ENCODE measurements at regions of chr6 and their contacts with region 1.

Region 1: DNA sequence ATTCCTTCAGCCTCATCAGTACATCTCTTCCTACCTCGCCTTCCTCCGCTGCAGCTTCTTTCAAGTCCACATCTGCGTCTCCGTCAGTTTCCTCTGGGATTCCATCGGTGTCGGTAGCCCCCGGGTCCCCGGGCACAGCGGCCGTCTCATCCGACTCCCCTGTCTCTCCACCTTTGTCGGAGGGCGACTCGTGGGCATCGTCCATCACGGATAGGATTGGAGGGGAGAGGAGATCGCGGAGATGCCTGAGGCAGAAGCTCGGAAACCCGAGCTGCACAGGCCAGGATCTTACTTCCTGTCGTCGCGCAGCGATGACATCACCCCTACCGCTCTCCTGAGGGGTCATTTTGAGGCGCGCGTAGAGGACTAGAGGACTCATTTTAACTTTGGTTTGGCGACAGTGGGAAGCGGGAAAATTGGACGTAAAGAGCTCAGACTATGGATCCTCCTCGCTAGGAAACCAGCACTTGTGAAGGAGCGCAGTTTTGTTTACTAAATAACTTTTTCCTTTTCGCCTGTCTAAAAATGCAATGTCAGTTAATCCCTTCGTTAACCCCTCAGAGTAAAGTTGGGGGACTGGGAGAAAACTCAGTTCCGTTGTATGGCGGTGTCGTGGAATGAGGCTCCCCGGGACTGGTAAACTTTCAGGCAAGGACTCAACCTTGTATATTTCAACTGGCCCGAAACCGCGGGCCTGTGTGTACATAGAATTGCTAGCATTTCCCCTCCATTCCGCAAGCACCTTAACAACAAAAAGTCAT is at the start of gene TAF11:
- DNase-seq: peak; percentile 94
- H3K4me3 Mint-ChIP-seq: peak within 1 kb of the TSS; percentile 99
- H3K27ac Mint-ChIP-seq: peak within 1 kb of the TSS; percentile 99
- H3K4me1 Mint-ChIP-seq: peaks cover 17% of the 10 kb centered on the region
- H3K27me3 Mint-ChIP-seq: no peaks in the 10 kb centered on the region
- CTCF ChIP-seq: no peak
- total RNA-seq, gene TAF11: 16.5 and 22.2 TPM in 2 replicates

Region 2: DNA sequence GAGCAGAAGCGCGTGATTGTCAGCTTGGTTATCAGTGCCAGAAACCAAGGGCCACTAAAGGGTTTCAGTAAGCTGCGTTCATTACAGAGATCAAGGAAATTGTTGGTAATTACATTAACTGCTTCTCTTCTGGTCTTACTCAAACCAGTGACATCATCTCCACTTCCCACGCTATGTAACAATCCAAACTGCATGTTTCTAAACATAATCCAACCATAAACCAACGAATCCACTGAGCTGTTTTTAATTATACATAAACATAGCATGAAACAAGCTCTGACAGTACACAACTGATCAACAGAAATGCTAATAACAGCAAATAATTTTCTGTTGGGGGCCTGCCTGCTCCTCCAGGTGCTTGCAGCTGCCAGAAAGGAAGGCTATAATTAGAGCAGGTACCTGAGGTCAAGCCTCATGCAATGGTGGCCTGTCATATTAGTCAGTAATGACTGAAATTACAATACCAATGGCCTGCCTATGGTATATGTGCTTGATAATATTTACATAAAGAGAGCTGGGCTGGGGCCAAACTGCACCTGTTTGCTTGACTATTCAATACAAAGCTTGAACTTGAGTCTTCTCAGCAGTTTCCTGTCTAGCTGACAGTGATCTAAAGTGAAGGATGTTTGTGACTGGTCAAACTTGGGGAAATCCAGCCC is 231.4 kb before region 1 on chr6:
- CTCF ChIA-PET with region 1: no interaction called
- POLR2A ChIA-PET with region 1: interaction called, 20 read pairs
- intact Hi-C with region 1: no loop called
- DNase-seq: peak; percentile 41
- H3K4me3 Mint-ChIP-seq: peak overlapping the region; percentile 75
- H3K27ac Mint-ChIP-seq: peak overlapping the region; percentile 89
- H3K4me1 Mint-ChIP-seq: peaks cover 19% of the 10 kb centered on the region
- H3K27me3 Mint-ChIP-seq: no peaks in the 10 kb centered on the region
- CTCF ChIP-seq: no peak

Region 3: GRCh38 chr6:34757687-34758274 is 130.2 kb before region 1 on chr6:
- CTCF ChIA-PET with region 1: no interaction called
- POLR2A ChIA-PET with region 1: interaction called, 20 read pairs
- intact Hi-C with region 1: loop called (anchors 5 kb)
- DNase-seq: no peak
- H3K4me3 Mint-ChIP-seq: no peak overlapping the region
- H3K27ac Mint-ChIP-seq: no peak overlapping the region
- H3K4me1 Mint-ChIP-seq: peaks cover 6% of the 10 kb centered on the region
- H3K27me3 Mint-ChIP-seq: no peaks in the 10 kb centered on the region
- CTCF ChIP-seq: no peak

Region 4: GRCh38 chr6:34810936-34811632 is 76.8 kb before region 1 on chr6:
- CTCF ChIA-PET with region 1: interaction called, 3 read pairs
- POLR2A ChIA-PET with region 1: interaction called, 13 read pairs
- intact Hi-C with region 1: no loop called
- DNase-seq: peak; percentile 67
- H3K4me3 Mint-ChIP-seq: no peak overlapping the region
- H3K27ac Mint-ChIP-seq: peak overlapping the region; percentile 71
- H3K4me1 Mint-ChIP-seq: peaks cover 15% of the 10 kb centered on the region
- H3K27me3 Mint-ChIP-seq: no peaks in the 10 kb centered on the region
- CTCF ChIP-seq: no peak

Region 5: DNA sequence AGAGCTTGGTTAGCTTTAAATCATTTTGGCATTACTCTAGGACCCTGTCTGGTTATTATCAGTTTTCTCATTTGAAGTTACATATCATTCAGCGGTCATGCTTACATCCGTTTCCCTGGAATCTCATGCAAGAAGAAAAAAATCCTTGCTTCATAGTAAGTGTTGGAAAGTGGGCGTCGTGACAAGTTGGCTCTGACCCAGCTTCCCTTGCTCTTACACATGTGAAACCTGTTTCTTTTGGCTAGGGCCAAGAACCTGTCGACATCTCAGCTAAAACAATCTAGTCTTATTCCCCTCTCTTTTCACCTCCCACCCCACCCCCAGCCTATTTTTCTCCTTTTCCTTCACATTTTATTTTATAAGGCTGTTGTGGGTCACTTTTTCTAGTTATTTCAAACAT is 46.6 kb after region 1 on chr6:
- CTCF ChIA-PET with region 1: no interaction called
- POLR2A ChIA-PET with region 1: interaction called, 12 read pairs
- intact Hi-C with region 1: no loop called
- DNase-seq: peak; percentile 87
- H3K4me3 Mint-ChIP-seq: no peak overlapping the region
- H3K27ac Mint-ChIP-seq: no peak overlapping the region
- H3K4me1 Mint-ChIP-seq: peaks cover 8% of the 10 kb centered on the region
- H3K27me3 Mint-ChIP-seq: no peaks in the 10 kb centered on the region
- CTCF ChIP-seq: no peak

Region 6: DNA sequence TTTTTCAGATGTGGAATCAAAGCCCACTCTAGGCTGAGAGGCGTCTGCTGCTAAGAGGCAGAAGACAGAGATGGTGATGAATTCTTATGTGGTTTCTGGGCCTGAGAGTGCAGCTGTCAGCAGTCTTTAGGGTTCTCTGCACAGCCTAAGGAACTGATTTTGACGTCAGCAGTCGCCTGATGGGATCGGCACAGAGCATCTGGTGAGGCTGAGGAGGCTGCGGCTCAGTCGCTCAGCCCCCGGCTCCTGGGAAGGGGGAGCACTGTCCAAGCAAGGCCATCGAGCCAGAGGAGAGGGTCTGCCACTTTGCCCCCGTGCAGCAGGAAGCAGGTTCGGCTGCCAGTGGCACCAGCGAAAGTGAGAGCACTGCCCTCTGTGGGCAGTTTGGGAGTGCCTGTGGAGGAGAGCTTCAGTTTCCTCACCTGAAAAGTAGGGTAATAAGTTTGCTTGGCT is 160.7 kb after region 1 on chr6:
- CTCF ChIA-PET with region 1: no interaction called
- POLR2A ChIA-PET with region 1: no interaction called
- intact Hi-C with region 1: no loop called
- DNase-seq: no peak
- H3K4me3 Mint-ChIP-seq: no peak overlapping the region
- H3K27ac Mint-ChIP-seq: no peak overlapping the region
- H3K4me1 Mint-ChIP-seq: peaks cover 23% of the 10 kb centered on the region
- H3K27me3 Mint-ChIP-seq: no peaks in the 10 kb centered on the region
- CTCF ChIP-seq: no peak

Region 7: DNA sequence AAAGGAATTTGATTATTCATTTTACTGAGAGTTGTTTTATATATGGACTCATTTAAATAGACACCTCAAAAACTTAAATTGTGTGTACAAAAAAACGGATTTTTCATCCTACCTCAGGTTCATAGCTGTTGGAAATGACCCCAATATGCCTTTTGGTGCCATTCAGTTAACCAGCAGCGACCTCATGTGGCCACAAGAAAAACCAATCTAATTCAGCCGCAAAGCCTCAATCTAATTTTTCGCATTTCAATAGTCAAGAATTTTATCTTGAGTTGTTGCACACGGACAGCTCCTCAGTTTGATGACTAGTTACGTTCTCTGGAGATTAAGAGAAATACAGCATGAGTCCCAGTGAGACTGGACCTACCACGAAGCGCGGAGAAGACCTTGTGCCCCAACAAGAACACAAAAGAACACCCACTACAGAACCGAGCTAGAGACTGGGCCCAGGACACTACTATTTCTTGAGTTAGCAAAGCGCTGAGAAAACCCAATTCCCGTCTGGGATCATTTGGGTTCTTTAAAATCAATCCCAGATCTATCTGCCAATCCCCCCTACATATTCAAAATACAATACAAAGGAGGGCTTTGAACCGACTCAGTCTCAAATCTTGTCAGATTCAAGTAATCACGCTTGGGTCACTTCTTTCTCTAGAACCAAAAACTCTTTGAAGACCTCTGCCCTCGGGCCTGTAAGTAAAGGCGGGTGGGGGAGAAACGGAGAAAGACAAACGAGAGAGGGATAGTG is 252.1 kb after region 1 on chr6:
- CTCF ChIA-PET with region 1: interaction called, 7 read pairs
- POLR2A ChIA-PET with region 1: interaction called, 4 read pairs
- intact Hi-C with region 1: loop called (anchors 1 kb)
- DNase-seq: peak; percentile 70
- H3K4me3 Mint-ChIP-seq: no peak overlapping the region
- H3K27ac Mint-ChIP-seq: no peak overlapping the region
- H3K4me1 Mint-ChIP-seq: peaks cover 4% of the 10 kb centered on the region
- H3K27me3 Mint-ChIP-seq: no peaks in the 10 kb centered on the region
- CTCF ChIP-seq: peak; percentile 91

Measured in MCF 10A (cell line).